ENCODE measurements at regions of chr20 and their contacts with region 1.

Region 1: DNA sequence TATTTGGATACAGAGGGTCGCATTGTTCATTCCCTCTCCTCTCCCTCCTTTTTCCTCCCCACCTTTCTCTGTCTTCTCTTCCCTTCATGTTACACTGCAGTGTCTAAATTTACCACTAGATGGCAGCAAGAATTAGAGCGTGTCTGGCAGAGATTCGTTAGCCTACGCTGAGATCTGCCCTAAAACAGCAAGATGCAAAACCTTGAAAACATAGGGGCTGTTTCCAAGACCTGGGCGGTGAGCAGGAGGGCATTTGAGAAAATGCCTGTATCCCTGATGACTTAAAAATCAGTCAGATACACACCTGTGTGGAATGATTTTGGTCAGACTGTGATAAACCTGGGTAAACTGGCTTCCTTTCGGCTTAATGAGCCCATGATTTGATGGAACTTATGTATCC is 101.5 kb upstream of the ISM1 start:
- DNase-seq: peak; percentile 57
- ATAC-seq: peak; percentile 96
- H3K4me3 ChIP-seq: no peak overlapping the region
- H3K27ac ChIP-seq: no peak overlapping the region
- H3K4me1 ChIP-seq: no peaks in the 10 kb centered on the region
- H3K27me3 ChIP-seq: no peaks in the 10 kb centered on the region; the same call in 1 of the 2 replicates
- CTCF ChIP-seq: peak; percentile 87
- POLR2A ChIP-seq: no peak
- RAD21 ChIP-seq: peak; percentile 79

Region 2: GRCh38 chr20:13212750-13213149 is 93.2 kb after region 1 on chr20:
- CTCF ChIA-PET with region 1: no interaction called
- POLR2A ChIA-PET with region 1: no interaction called
- dilution Hi-C with region 1: no loop called
- in situ Hi-C with region 1: no loop called
- intact Hi-C with region 1: no loop called
- DNase-seq: no peak
- ATAC-seq: no peak
- H3K4me3 ChIP-seq: no peak overlapping the region
- H3K27ac ChIP-seq: no peak overlapping the region
- H3K4me1 ChIP-seq: no peaks in the 10 kb centered on the region
- H3K27me3 ChIP-seq: peaks cover 9% of the 10 kb centered on the region
- CTCF ChIP-seq: no peak
- POLR2A ChIP-seq: no peak
- RAD21 ChIP-seq: no peak

Region 3: DNA sequence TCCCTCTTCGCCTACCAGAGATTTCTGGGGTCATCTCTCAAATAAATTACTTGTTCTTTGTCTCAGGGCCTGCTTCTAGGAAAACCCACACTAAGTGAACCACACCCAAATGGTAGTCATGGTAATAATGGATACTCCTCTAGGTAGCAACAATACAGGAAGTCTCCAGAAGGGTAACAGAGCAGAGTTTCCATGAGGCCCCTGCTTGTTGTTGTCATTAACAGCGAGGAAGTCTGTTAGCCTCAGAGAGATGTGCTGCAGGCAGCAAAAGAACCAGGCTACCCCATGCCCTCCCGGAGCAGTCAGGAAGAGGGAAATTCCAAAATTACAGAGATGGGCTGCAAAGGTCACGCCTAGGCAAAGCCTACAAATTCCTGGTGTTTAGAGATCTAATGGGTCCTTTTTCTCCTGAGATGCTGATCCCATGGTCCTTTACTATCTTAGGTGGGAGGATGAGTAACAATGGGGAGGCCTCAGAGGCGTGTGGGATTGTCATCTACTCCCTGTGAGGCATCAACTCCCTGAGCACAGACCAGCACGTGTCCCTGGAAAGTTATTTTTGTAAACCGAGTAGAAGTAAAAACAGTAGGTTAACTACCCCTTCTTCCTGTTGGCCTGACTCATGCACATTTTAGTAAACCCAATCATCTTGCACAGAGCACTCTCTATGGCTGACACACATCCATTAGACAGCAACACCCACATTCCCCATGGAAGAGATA is 111.6 kb after region 1 on chr20:
- CTCF ChIA-PET with region 1: no interaction called
- POLR2A ChIA-PET with region 1: no interaction called
- dilution Hi-C with region 1: no loop called
- in situ Hi-C with region 1: no loop called
- intact Hi-C with region 1: no loop called
- DNase-seq: peak; percentile 28
- ATAC-seq: peak; percentile 56
- H3K4me3 ChIP-seq: no peak overlapping the region
- H3K27ac ChIP-seq: no peak overlapping the region
- H3K4me1 ChIP-seq: no peaks in the 10 kb centered on the region
- H3K27me3 ChIP-seq: peaks cover 2% of the 10 kb centered on the region; the same call in 1 of the 2 replicates
- CTCF ChIP-seq: no peak
- POLR2A ChIP-seq: no peak
- RAD21 ChIP-seq: no peak

Region 4: DNA sequence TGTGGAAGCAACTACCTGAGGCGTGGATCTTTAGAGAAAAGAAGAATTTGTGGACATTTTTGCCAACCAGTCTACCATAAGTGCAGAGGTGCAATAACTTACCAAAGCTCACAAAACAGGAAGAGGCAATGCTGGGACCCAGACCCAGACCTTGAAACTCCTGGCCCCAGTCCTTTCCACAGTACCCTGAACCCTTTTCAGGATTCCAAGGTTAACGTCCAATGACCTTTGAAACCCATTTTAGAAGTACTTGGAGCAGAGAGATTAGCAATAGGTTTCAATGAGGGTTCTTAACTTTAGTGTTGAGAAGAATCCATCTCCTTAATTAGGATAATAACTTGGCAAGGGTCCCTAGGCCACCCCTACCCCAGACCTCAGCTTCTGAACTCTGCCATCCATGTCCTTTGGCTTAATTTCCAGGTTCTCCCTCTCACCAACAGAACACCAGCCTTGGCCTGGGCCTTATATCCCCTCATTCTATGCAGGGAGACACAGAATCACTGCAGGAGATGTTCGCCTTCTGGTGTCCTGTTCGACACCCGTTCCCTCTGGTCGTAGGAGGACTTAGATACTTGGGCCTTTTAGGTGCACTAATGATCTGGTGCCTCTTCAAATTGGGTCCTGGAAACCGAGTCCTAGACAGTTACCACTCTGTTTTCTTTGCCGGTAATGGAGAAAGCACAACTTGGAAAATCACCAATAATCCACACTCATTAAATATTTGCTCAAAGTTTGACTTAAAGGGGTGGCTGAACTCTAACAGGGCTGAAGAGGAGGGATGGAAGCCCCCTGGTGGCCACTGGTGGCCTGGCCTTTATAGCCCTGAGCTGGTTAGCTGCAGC is 142.1 kb after region 1 on chr20:
- CTCF ChIA-PET with region 1: no interaction called
- POLR2A ChIA-PET with region 1: no interaction called
- dilution Hi-C with region 1: no loop called
- in situ Hi-C with region 1: no loop called
- intact Hi-C with region 1: loop called (anchors 1 kb)
- DNase-seq: peak; percentile 21
- ATAC-seq: peak; percentile 87
- H3K4me3 ChIP-seq: no peak overlapping the region
- H3K27ac ChIP-seq: no peak overlapping the region
- H3K4me1 ChIP-seq: no peaks in the 10 kb centered on the region
- H3K27me3 ChIP-seq: no peaks in the 10 kb centered on the region; the same call in 1 of the 2 replicates
- CTCF ChIP-seq: peak; percentile 54
- POLR2A ChIP-seq: no peak
- RAD21 ChIP-seq: peak; percentile 27; the same call in 1 of the 2 replicates

Region 5: DNA sequence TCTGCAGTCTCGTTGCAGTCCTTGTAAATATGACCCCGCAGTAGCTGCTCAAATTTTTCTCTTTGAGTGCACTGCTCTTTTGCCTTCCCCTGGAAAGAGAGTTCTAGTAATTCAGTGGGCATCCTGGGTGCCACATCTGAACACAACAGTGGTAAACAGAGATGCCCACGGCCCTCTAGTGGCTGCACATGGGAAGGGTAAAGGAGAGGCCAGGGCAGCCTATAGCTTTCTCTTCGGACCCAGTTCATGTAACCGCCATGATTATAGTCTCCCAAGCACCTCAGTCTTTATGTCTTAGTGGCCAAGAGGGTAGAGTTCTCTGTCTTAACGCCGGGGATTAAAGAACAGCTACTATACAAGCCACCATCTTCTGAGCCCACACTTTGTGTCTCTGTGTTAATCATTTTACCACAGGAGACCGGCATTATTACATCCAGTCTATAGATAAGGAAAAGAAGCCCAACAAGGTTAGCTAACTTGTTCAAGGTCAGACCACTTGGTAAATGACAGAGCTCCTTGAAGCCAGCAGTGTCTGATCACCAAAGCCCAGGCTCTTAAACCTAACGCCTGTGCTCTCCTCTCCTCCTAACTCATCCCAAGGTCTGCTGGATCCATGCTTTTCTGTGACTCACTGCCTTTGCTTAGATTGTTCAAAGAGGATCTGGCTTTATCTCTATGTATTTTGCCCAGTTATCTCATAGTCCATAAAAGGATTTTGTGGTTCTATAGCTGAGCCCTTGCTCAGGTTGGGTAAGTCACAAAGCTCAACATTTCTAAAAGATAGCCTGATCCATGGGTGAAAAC is 183.3 kb after region 1 on chr20:
- CTCF ChIA-PET with region 1: no interaction called
- POLR2A ChIA-PET with region 1: no interaction called
- dilution Hi-C with region 1: no loop called
- in situ Hi-C with region 1: no loop called
- intact Hi-C with region 1: loop called (anchors 1 kb)
- DNase-seq: no peak
- ATAC-seq: peak; percentile 42; the same call in 1 of the 2 replicates
- H3K4me3 ChIP-seq: no peak overlapping the region
- H3K27ac ChIP-seq: no peak overlapping the region
- H3K4me1 ChIP-seq: no peaks in the 10 kb centered on the region
- H3K27me3 ChIP-seq: no peaks in the 10 kb centered on the region; the same call in 1 of the 2 replicates
- CTCF ChIP-seq: peak; percentile 35
- POLR2A ChIP-seq: no peak
- RAD21 ChIP-seq: peak; percentile 29; the same call in 1 of the 2 replicates

Region 6: DNA sequence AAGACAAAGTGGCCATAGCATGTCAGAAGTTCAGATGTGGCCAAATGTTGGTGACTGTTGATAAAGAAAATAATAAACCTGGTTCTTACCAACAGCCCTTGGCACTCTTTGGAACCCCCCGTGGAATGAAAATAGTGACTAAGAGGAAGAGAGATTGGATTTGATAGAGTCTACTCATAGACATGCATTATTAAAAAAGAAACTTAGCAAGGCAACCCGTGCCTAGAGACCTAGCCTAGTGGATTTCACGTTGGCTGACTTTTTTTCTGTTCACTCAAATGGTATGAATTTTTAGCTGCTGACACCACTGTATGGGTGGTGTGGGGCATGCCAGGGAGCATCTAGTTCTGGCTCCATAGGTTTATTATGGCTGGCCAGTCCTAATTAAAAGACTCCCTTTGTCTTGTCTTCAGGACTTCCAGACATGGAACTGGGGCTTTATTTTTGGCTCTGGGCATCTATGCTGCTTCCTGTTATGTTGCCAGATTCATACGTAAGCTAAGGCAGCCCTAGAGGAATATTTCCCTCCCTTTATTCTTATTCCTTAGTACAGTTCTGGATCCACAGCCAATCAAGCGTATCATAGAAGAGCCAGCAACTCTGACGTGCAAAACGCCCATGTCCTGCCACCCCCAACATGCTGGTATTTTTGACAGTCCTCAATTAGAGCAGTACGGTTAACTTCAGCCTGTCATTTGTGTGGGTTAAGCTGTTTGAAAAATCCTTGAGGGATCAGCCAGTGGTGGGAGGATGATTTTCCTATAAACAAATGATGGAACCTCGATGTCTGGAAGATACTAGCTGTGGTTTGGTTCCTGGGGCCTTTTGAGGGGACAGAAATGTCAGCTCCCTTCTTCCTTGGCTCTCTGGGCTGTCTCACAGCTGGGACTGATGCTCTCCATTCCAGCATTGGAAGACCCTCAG is 229.0 kb after region 1 on chr20:
- CTCF ChIA-PET with region 1: no interaction called
- POLR2A ChIA-PET with region 1: no interaction called
- dilution Hi-C with region 1: no loop called
- in situ Hi-C with region 1: no loop called
- intact Hi-C with region 1: no loop called
- DNase-seq: peak; percentile 26
- ATAC-seq: peak; percentile 62
- H3K4me3 ChIP-seq: 0 out of 2 replicates have a peak overlapping the region, but pooled peaks have one; percentile 14
- H3K27ac ChIP-seq: peak overlapping the region; percentile 88; the same call in 1 of the 2 replicates
- H3K4me1 ChIP-seq: peaks cover 12% of the 10 kb centered on the region
- H3K27me3 ChIP-seq: peaks cover 7% of the 10 kb centered on the region
- CTCF ChIP-seq: no peak
- POLR2A ChIP-seq: no peak
- RAD21 ChIP-seq: no peak

Region 7: DNA sequence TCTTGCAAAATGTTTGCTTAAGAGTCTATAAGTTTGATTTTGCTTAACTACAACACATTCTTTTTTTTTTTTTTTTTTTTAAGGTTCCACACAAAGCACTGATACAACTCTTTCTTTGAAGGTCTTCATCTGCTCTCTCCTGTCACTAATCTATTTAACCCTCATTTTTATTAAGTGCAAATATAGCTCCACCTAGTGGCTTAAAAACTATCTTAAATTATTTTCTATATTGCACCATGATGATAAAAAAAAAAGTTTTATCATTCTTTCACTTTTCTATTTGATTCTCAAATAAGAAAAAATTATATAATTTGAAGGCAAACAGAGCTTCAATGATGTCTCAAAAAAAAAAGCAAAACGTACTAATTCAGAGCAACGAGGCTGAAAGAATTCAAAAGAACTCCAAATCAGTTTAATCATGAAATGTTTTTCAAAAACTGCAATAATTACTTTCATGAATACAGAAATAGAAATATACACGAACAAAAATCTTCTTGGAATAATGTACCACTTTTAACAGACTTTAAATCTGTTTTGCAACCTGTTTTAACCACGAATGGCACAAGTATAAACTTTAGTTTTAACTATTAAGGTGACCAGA is 652.4 kb after region 1 on chr20:
- CTCF ChIA-PET with region 1: no interaction called
- POLR2A ChIA-PET with region 1: no interaction called
- dilution Hi-C with region 1: no loop called
- in situ Hi-C with region 1: loop called (anchors 5 kb)
- intact Hi-C with region 1: loop called (anchors 1 kb)
- DNase-seq: peak; percentile 27
- ATAC-seq: peak; percentile 48; the same call in 1 of the 2 replicates
- H3K4me3 ChIP-seq: no peak overlapping the region
- H3K27ac ChIP-seq: no peak overlapping the region
- H3K4me1 ChIP-seq: no peaks in the 10 kb centered on the region
- H3K27me3 ChIP-seq: no peaks in the 10 kb centered on the region
- CTCF ChIP-seq: peak; percentile 51
- POLR2A ChIP-seq: no peak
- RAD21 ChIP-seq: peak; percentile 26

Region 8: GRCh38 chr20:13784893-13785715 is 665.5 kb after region 1 on chr20 and contains the starts of genes ESF1 and NDUFAF5:
- CTCF ChIA-PET with region 1: no interaction called
- POLR2A ChIA-PET with region 1: interaction called, 3 read pairs
- dilution Hi-C with region 1: no loop called
- in situ Hi-C with region 1: no loop called
- intact Hi-C with region 1: loop called (anchors 5 kb)
- DNase-seq: peak; percentile 97
- ATAC-seq: peak; percentile 97
- H3K4me3 ChIP-seq: peak within 1 kb of the TSS; percentile 68
- H3K27ac ChIP-seq: peak within 1 kb of the TSS; percentile 69
- H3K4me1 ChIP-seq: peaks cover 3% of the 10 kb centered on the region
- H3K27me3 ChIP-seq: no peaks in the 10 kb centered on the region
- CTCF ChIP-seq: no peak
- POLR2A ChIP-seq: peak; percentile 36; the same call in 1 of the 2 replicates
- RAD21 ChIP-seq: no peak
- total RNA-seq, gene ESF1: 2.7 and 5.3 TPM in 2 replicates
- total RNA-seq, gene NDUFAF5: 6.8 and 22.8 TPM in 2 replicates

Region 9: GRCh38 chr20:14055127-14055742 is 935.7 kb after region 1 on chr20:
- CTCF ChIA-PET with region 1: no interaction called
- POLR2A ChIA-PET with region 1: no interaction called
- dilution Hi-C with region 1: no loop called
- in situ Hi-C with region 1: no loop called
- intact Hi-C with region 1: loop called (anchors 5 kb)
- DNase-seq: peak; percentile 61
- ATAC-seq: peak; percentile 46; the same call in 1 of the 2 replicates
- H3K4me3 ChIP-seq: no peak overlapping the region
- H3K27ac ChIP-seq: no peak overlapping the region
- H3K4me1 ChIP-seq: no peaks in the 10 kb centered on the region
- H3K27me3 ChIP-seq: no peaks in the 10 kb centered on the region
- CTCF ChIP-seq: peak; percentile 66
- POLR2A ChIP-seq: no peak
- RAD21 ChIP-seq: peak; percentile 66

Measured in IMR-90 (cell line).